Activated T-helper 1 cell treated with anti-CD3 and anti-CD28 coated beads, Interleukin-12 subunit alpha, Interleukin-12 subunit beta, Interleukin-2, Interleukin-4 antibody, amounts not matched to agents 30 ng/mL and 10 ng/mL and 1 ng/mL, durations not matched to agents 14 hours and 24 hours and 36 hours (primary cell): ENCODE measurements at regions of chr7 and their contacts with region 1.

Region 1: GRCh38 chr7:50397320-50397970 is 52.7 kb downstream of the FIGNL1 start:
- DNase-seq: peak; percentile 56
- H3K4me3 Mint-ChIP-seq: peak overlapping the region; percentile 21
- H3K27ac Mint-ChIP-seq: peak overlapping the region; percentile 92
- H3K4me1 Mint-ChIP-seq: peaks cover 74% of the 10 kb centered on the region
- H3K27me3 Mint-ChIP-seq: no peaks in the 10 kb centered on the region

Region 2: DNA sequence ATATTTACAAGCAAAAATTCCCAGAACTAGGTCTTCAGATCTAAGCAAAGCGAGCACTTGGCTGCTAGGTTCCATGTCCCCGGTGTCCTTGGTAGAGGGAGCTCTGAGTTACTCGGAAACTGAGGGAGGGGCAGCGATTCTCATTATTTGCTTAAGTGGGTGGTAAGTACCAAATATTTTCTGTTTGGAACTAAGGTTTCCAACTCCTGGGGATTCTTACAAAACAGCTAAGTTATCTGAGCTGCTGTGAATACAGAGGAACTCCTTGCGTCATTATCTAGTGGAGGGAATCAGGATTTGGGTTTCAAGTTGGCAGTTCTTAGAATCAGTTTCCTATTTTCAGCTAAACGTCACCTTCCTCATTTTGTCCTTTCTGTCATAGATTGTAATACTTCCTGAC is 169.7 kb before region 1 on chr7:
- intact Hi-C with region 1: loop called (anchors 1 kb)
- DNase-seq: no peak
- H3K4me3 Mint-ChIP-seq: peak overlapping the region; percentile 52
- H3K27ac Mint-ChIP-seq: peak overlapping the region; percentile 91
- H3K4me1 Mint-ChIP-seq: peaks cover 46% of the 10 kb centered on the region
- H3K27me3 Mint-ChIP-seq: no peaks in the 10 kb centered on the region

Region 3: GRCh38 chr7:50317221-50317678 is 80.2 kb before region 1 on chr7:
- intact Hi-C with region 1: loop called (anchors 1 kb)
- DNase-seq: peak; percentile 53
- H3K4me3 Mint-ChIP-seq: peak overlapping the region; percentile 82
- H3K27ac Mint-ChIP-seq: peak overlapping the region; percentile 93
- H3K4me1 Mint-ChIP-seq: peaks cover 100% of the 10 kb centered on the region
- H3K27me3 Mint-ChIP-seq: no peaks in the 10 kb centered on the region

Region 4: GRCh38 chr7:50349963-50350944 is 47.2 kb before region 1 on chr7:
- intact Hi-C with region 1: loop called (anchors 1 kb)
- DNase-seq: peak; percentile 77
- H3K4me3 Mint-ChIP-seq: peak overlapping the region; percentile 53
- H3K27ac Mint-ChIP-seq: peak overlapping the region; percentile 93
- H3K4me1 Mint-ChIP-seq: peaks cover 97% of the 10 kb centered on the region
- H3K27me3 Mint-ChIP-seq: no peaks in the 10 kb centered on the region

Region 5: GRCh38 chr7:50418086-50418515 is 20.7 kb after region 1 on chr7:
- intact Hi-C with region 1: loop called (anchors 1 kb)
- DNase-seq: peak; percentile 64
- H3K4me3 Mint-ChIP-seq: no peak overlapping the region
- H3K27ac Mint-ChIP-seq: no peak overlapping the region
- H3K4me1 Mint-ChIP-seq: peaks cover 32% of the 10 kb centered on the region
- H3K27me3 Mint-ChIP-seq: no peaks in the 10 kb centered on the region

Region 6: DNA sequence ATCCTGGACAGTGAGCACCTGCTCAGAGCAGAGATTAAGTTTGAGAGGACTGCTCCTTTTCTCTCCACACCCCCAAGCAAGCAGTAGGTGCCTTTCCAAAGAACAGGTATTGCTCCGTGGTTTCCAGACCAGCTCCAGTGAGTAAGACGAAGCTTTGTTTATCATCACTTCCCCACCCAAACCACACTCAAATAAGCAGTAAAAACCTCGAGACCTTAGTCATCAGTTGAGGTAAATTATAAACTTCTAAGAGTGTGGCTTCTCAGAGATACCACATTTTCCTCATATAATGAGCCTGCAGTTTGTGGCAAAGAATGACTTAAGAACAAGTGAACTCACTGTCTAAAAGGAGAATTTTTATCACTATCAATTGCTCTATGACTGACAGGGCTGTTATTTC is 435.3 kb after region 1 on chr7:
- intact Hi-C with region 1: loop called (anchors 1 kb)
- DNase-seq: peak; percentile 42
- H3K4me3 Mint-ChIP-seq: peak overlapping the region; percentile 45
- H3K27ac Mint-ChIP-seq: peak overlapping the region; percentile 30
- H3K4me1 Mint-ChIP-seq: peaks cover 45% of the 10 kb centered on the region
- H3K27me3 Mint-ChIP-seq: peaks cover 21% of the 10 kb centered on the region